ENCODE measurements at regions of chr11 and their contacts with region 1.

Region 1: DNA sequence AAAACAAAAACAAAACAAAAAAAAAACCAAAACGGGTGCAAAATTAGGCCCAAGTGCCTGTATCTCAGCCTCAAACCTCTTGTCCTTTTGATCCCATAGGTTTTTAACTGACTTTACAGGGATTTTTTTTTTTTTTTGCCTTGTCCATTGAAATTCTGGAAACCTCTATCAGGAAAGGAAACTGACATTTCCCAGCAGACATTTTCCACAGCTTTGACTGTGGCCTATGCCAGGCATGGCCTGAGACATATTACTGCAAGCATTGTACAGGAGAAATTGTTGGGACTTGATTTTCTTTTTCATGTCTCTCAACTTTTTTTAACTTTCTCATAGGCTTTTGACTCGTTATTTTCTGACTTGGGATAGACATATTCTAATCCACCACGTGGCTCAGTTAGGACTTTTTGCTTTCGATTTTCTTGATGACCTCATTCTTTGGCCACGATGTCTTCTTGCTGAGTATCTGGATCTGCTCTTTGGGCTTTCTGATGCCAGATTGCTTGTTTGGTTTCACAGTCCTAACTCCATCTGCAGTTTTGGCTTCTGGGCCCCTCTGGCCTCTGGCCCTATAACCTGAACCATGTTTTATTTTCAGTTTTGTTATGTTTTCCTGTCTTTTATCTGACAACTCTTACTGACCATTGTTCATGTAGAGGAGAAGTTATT is 336.1 kb upstream of the C11orf87 start:
- DNase-seq: peak; percentile 28
- H3K4me3 ChIP-seq: no peak overlapping the region
- H3K27ac ChIP-seq: peak overlapping the region; percentile 43
- H3K4me1 ChIP-seq: no peaks in the 10 kb centered on the region
- H3K27me3 ChIP-seq: no peaks in the 10 kb centered on the region
- CTCF ChIP-seq: no peak

Region 2: GRCh38 chr11:108967571-108967970 is 118.3 kb before region 1 on chr11:
- intact Hi-C with region 1: no loop called
- DNase-seq: peak; percentile 25
- H3K4me3 ChIP-seq: peak overlapping the region; percentile 11
- H3K27ac ChIP-seq: peak overlapping the region; percentile 78
- H3K4me1 ChIP-seq: peaks cover 7% of the 10 kb centered on the region
- H3K27me3 ChIP-seq: no peaks in the 10 kb centered on the region
- CTCF ChIP-seq: no peak

Region 3: GRCh38 chr11:109026891-109027489 is 58.9 kb before region 1 on chr11:
- intact Hi-C with region 1: loop called (anchors 10 kb)
- DNase-seq: no peak
- H3K4me3 ChIP-seq: no peak overlapping the region
- H3K27ac ChIP-seq: no peak overlapping the region
- H3K4me1 ChIP-seq: no peaks in the 10 kb centered on the region
- H3K27me3 ChIP-seq: no peaks in the 10 kb centered on the region
- CTCF ChIP-seq: no peak

Region 4: GRCh38 chr11:109140857-109141515 is 55.1 kb after region 1 on chr11:
- intact Hi-C with region 1: no loop called
- DNase-seq: no peak
- H3K4me3 ChIP-seq: no peak overlapping the region
- H3K27ac ChIP-seq: no peak overlapping the region
- H3K4me1 ChIP-seq: no peaks in the 10 kb centered on the region
- H3K27me3 ChIP-seq: no peaks in the 10 kb centered on the region
- CTCF ChIP-seq: no peak

Measured in left ventricle myocardium inferior (tissue), 1 donor.